ENCODE measurements at regions of chr11 and their contacts with region 1.

Region 1: GRCh38 chr11:20035701-20036620 is 124.3 kb downstream of the DBX1 start:
- DNase-seq: peak; percentile 91
- ATAC-seq: peak; percentile 87
- H3K4me3 ChIP-seq: peak overlapping the region in 2 of 3 experiments; percentile 17 to 53; a peak in 3 of 6 replicates
- H3K27ac ChIP-seq: peak overlapping the region; percentile 63
- H3K4me1 ChIP-seq: peaks cover 74% of the 10 kb centered on the region
- H3K27me3 ChIP-seq: no peaks in the 10 kb centered on the region
- CTCF ChIP-seq: no peak
- EP300 ChIP-seq: peak in 1 of 2 experiments; percentile 92; a peak in 2 of 4 replicates
- POLR2A ChIP-seq: peak; percentile 23 to 38; a peak in 2 of 4 replicates
- RAD21 ChIP-seq: no peak

Region 2: DNA sequence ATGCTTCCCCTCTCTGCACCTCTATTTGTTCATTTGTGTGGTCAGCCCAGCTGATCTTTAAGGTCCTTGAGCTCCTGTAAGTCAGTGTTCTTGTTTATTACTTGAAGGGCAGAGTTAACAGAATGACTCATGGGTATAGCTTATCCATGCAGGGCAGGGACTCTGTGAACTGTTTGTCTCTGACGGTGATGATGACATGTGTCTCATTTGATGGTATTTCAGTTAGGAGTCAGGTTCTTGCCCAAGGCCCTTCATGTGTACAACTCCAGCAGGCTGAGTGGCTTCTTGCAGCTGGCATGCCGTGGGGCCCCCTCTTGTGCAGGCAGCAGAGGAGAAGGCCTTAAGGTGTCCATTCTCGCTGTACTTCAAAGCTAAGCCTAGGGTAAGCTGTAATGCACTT is 40.8 kb before region 1 on chr11:
- CTCF ChIA-PET with region 1: no interaction called
- POLR2A ChIA-PET with region 1: interaction called, 37 read pairs
- in situ Hi-C with region 1: no loop called
- intact Hi-C with region 1: loop called (anchors 5 kb)
- DNase-seq: peak; percentile 88
- ATAC-seq: peak; percentile 86
- H3K4me3 ChIP-seq: no peak overlapping the region
- H3K27ac ChIP-seq: peak overlapping the region; percentile 13
- H3K4me1 ChIP-seq: peaks cover 48% of the 10 kb centered on the region
- H3K27me3 ChIP-seq: no peaks in the 10 kb centered on the region
- CTCF ChIP-seq: no peak
- EP300 ChIP-seq: peak; percentile 34 to 39; a peak in 2 of 4 replicates
- POLR2A ChIP-seq: no peak
- RAD21 ChIP-seq: no peak

Region 3: GRCh38 chr11:20013346-20014066 is 22.5 kb before region 1 on chr11:
- CTCF ChIA-PET with region 1: no interaction called
- POLR2A ChIA-PET with region 1: interaction called, 10 read pairs
- in situ Hi-C with region 1: no loop called
- intact Hi-C with region 1: no loop called
- DNase-seq: peak; percentile 73
- ATAC-seq: peak; percentile 80
- H3K4me3 ChIP-seq: peak overlapping the region in 1 of 3 experiments; percentile 27; a peak in 3 of 6 replicates
- H3K27ac ChIP-seq: peak overlapping the region; percentile 68
- H3K4me1 ChIP-seq: peaks cover 93% of the 10 kb centered on the region
- H3K27me3 ChIP-seq: no peaks in the 10 kb centered on the region
- CTCF ChIP-seq: no peak
- EP300 ChIP-seq: peak in 1 of 2 experiments; percentile 49; a peak in 1 of 4 replicates
- POLR2A ChIP-seq: no peak
- RAD21 ChIP-seq: no peak

Region 4: DNA sequence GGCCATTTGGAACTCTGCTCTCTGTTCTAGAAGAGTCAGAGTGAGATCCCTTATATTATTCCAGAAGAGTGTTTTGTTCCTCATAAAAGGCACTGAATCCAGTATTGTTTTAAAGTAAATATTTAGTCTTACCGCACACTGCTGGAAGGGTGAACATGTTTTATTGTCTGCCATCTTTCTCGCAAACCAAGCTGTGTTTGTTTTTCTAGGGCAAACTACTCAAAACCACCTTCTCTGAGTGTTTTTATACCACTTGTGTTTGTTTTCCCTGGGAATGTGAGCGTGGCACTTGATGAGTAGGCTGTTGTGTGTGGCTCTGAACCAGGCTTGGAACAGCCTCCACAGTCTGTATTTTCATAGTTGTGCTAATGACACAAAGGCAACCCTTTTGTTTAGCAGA is 34.5 kb after region 1 on chr11:
- CTCF ChIA-PET with region 1: no interaction called
- POLR2A ChIA-PET with region 1: no interaction called
- in situ Hi-C with region 1: no loop called
- intact Hi-C with region 1: loop called (anchors 5 kb)
- DNase-seq: peak; percentile 15
- ATAC-seq: no peak
- H3K4me3 ChIP-seq: no peak overlapping the region
- H3K27ac ChIP-seq: peak overlapping the region; percentile 13
- H3K4me1 ChIP-seq: peaks cover 15% of the 10 kb centered on the region
- H3K27me3 ChIP-seq: no peaks in the 10 kb centered on the region
- CTCF ChIP-seq: no peak
- EP300 ChIP-seq: no peak
- POLR2A ChIP-seq: no peak
- RAD21 ChIP-seq: no peak

Region 5: DNA sequence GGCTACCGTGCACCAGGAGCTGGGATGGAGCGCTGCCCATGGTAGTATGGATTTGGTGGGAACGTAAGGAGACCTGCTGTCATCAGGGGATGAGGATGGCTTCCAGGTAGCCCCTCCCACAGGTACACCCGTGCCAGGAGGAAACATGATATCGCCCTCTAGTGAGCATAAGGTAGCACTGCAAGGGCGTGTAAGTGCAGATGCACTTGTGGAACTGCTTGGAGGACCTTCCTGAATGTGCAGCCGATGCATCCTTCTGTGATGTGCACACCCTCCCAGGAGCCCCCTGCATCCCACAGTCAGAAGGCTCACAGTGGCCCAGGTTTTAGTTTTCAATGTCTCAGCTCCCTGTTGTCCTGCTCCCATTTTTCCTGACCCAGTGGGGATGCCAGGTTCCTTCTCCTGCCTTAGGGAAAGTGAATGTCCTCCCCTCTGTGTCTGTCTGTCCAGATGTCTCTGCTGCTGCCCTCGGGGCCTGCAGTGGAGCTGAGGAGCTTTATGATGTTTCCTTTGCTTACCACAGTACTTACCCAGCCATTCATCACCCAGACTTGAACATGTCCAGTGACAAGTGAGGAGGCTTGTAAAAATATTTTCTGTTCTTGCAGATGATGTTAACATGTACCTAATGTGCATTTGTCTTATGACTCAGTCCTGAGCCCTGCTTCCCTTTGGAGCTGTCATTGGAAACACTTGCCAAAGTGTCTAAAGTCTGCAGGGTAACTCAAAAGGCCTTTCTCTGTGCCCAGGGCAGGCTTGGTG is 75.1 kb after region 1 on chr11:
- CTCF ChIA-PET with region 1: no interaction called
- POLR2A ChIA-PET with region 1: no interaction called
- in situ Hi-C with region 1: no loop called
- intact Hi-C with region 1: loop called (anchors 5 kb)
- DNase-seq: peak; percentile 70
- ATAC-seq: peak; percentile 85
- H3K4me3 ChIP-seq: no peak overlapping the region
- H3K27ac ChIP-seq: no peak overlapping the region
- H3K4me1 ChIP-seq: no peaks in the 10 kb centered on the region
- H3K27me3 ChIP-seq: no peaks in the 10 kb centered on the region
- CTCF ChIP-seq: peak; percentile 95
- EP300 ChIP-seq: no peak
- POLR2A ChIP-seq: no peak; a peak in 1 of 4 replicates
- RAD21 ChIP-seq: peak; percentile 45; the same call in 1 of the 2 replicates